ENCODE measurements at regions of chr2 and their contacts with region 1.

Region 1: DNA sequence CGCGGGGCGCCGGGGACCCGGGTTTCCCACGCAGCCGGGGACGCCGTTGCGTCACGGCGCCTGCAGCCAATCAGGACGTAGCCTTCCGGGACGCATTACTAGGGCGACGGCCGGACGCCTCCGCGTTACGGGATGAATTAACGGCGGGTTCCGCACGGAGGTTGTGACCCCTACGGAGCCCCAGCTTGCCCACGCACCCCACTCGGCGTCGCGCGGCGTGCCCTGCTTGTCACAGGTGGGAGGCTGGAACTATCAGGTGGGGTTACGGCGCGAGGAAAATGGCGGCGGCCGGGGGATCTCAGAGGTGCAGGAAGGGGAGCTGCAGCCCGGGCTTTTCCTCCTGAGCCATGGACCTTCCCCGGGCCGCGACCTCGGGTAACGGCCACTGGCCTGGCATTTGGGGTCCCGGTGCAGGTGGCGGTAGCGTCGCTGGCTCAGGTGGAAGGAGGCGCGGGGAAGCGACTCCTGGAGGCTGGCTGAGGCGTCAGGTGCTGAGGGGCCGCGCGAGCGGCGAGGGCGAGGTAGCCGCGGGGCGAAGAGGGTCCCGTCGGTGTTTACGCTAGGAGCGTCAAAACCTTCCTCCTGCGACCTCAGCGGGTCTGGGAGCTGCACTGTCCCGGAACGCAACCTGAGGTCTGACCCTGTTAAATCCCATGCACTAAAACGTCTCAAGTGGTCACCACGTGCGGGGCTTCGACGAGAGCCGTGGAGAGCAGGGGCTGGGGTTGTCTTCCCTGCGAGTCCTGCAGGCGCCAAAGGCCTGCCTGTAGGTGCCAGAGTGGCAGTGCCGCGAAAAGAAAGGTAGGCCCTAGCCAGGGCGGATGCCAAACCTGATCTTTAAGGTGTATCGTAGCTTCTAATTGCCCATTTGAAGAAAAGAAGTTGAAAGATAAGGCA is at the start of gene LCLAT1:
- DNase-seq: peak; percentile 92
- ATAC-seq: peak; percentile 93
- H3K4me3 ChIP-seq: peak within 1 kb of the TSS; percentile 88 to 98 (median 97)
- H3K4me3 Mint-ChIP-seq: peak within 1 kb of the TSS; percentile 97
- H3K27ac ChIP-seq: peak within 1 kb of the TSS; percentile 82 to 84
- H3K27ac Mint-ChIP-seq: peak within 1 kb of the TSS; percentile 95
- H3K4me1 ChIP-seq: peaks cover 16 to 17% of the 10 kb centered on the region in 2 donors
- H3K4me1 Mint-ChIP-seq: peaks cover 25% of the 10 kb centered on the region
- H3K27me3 ChIP-seq: no peaks in the 10 kb centered on the region
- H3K27me3 Mint-ChIP-seq: no peaks in the 10 kb centered on the region
- CTCF ChIP-seq: peak; percentile 20
- total RNA-seq, gene LCLAT1: 21.7 and 21.9 TPM in 2 replicates

Region 2: DNA sequence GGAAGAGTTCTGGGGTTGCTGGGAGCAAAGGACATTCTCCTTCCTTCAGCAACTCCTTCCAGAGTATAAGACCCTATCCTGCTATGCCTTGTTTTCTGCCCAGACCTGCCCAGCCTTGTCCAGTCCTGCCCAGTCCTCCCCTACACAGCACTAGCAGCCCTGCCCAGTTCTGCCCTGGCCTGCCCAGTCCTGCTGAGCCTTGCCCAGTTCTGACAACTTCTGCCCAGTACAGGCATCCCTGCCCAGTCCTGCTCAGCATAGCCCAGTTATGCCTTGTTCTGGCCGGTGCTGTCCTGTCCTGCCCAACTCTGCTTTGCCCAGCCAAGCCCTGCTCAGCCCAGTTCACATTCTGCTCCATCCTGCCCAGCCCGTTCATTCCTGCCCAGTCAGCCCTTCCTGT is 481.1 kb before region 1 on chr2:
- CTCF ChIA-PET with region 1: no interaction called
- POLR2A ChIA-PET with region 1: no interaction called
- intact Hi-C with region 1: no loop called
- DNase-seq: no peak
- ATAC-seq: no peak
- H3K4me3 ChIP-seq: no peak overlapping the region
- H3K4me3 Mint-ChIP-seq: no peak overlapping the region
- H3K27ac ChIP-seq: no peak overlapping the region
- H3K27ac Mint-ChIP-seq: no peak overlapping the region
- H3K4me1 ChIP-seq: no peaks in the 10 kb centered on the region
- H3K4me1 Mint-ChIP-seq: no peaks in the 10 kb centered on the region
- H3K27me3 ChIP-seq: peaks cover 0 to 11% (median 2%) of the 10 kb centered on the region in 4 experiments
- H3K27me3 Mint-ChIP-seq: peaks cover 18% of the 10 kb centered on the region
- CTCF ChIP-seq: no peak

Region 3: DNA sequence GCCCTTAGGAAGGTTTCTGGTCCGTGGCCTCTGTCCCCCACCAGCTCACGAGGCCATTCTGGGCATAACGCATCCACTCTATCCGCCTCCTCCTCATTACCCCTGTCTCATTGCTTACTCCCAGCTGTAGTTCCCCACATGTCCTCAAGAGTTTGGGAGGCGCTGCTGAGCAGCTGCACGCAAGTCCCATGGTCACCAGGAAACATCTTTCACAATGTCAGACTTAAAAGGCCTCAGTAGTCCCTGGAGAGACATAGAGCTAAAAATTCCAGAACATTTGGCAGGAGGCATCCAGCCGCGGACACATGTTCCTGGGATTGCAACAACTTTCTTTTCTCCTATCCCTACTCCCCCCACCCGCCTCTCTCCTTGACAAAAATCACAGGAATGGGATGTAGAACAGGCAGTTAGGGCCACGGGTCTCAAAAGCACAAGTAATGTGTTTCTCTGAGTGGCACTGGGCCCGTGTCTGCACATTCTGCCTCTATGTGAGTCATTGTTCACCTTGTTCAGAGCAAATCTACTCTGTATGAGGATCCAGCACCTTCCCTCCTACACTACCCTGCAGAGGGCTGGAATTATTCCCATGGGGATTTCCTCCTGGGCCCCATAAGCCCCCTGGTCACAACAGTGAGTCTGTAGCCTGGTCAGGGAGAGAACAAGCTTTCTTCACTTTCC is 207.9 kb before region 1 on chr2:
- CTCF ChIA-PET with region 1: interaction called, 23 read pairs
- POLR2A ChIA-PET with region 1: interaction called, 5 read pairs
- intact Hi-C with region 1: no loop called
- DNase-seq: peak; percentile 79
- ATAC-seq: peak; percentile 71
- H3K4me3 ChIP-seq: no peak overlapping the region
- H3K4me3 Mint-ChIP-seq: peak overlapping the region; percentile 35
- H3K27ac ChIP-seq: peak overlapping the region in 1 of 2 donors; percentile 94
- H3K27ac Mint-ChIP-seq: peak overlapping the region; percentile 62
- H3K4me1 ChIP-seq: peaks cover 73 to 79% of the 10 kb centered on the region in 2 donors
- H3K4me1 Mint-ChIP-seq: peaks cover 87% of the 10 kb centered on the region
- H3K27me3 ChIP-seq: no peaks in the 10 kb centered on the region
- H3K27me3 Mint-ChIP-seq: no peaks in the 10 kb centered on the region
- CTCF ChIP-seq: peak; percentile 88

Region 4: DNA sequence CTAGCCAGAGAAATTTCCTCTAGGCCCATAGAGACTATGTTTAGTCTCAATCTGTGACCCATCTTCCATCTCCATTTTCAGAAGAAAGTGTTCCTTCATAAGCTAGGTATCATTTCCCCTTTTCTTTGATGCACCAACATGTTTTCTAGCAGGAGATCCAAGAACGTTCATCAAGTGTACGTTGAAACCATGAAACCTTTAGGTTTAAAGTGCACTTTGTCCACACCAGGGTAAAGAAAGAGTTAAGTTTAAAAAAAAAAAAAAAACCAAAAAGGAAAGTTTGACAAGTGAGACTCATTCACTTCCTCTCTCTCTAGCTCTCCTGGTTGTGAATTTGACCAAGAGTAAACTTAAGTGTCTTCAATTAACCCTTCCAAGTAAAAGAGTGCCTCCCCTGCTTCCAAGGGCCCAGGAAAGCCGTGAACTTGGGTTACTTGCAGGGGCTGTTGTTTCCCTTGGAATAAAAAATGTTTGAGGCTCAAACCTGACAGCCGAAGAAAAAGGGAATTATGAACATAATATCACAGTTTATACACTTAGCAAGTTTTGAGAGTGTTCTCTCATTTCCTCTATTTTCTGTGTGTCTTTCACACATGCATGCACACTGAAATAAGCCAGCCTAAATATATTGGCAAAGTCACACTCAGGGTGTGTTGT is 159.4 kb before region 1 on chr2:
- CTCF ChIA-PET with region 1: interaction called, 3 read pairs
- POLR2A ChIA-PET with region 1: no interaction called
- intact Hi-C with region 1: loop called (anchors 5 kb)
- DNase-seq: peak; percentile 77
- ATAC-seq: peak; percentile 85
- H3K4me3 ChIP-seq: peak overlapping the region; percentile 19 to 69 (median 34)
- H3K4me3 Mint-ChIP-seq: peak overlapping the region; percentile 58
- H3K27ac ChIP-seq: peak overlapping the region; percentile 81 to 86
- H3K27ac Mint-ChIP-seq: peak overlapping the region; percentile 84
- H3K4me1 ChIP-seq: peaks cover 83 to 91% of the 10 kb centered on the region in 2 donors
- H3K4me1 Mint-ChIP-seq: peaks cover 82% of the 10 kb centered on the region
- H3K27me3 ChIP-seq: no peaks in the 10 kb centered on the region
- H3K27me3 Mint-ChIP-seq: no peaks in the 10 kb centered on the region
- CTCF ChIP-seq: no peak

Region 5: GRCh38 chr2:30421604-30422443 is 25.6 kb before region 1 on chr2:
- CTCF ChIA-PET with region 1: interaction called, 4 read pairs
- POLR2A ChIA-PET with region 1: interaction called, 4 read pairs
- intact Hi-C with region 1: loop called (anchors 2 kb)
- DNase-seq: peak; percentile 19
- ATAC-seq: peak; percentile 59
- H3K4me3 ChIP-seq: peak overlapping the region in 1 of 5 experiments; percentile 41
- H3K4me3 Mint-ChIP-seq: peak overlapping the region; percentile 64
- H3K27ac ChIP-seq: peak overlapping the region; percentile 64 to 81
- H3K27ac Mint-ChIP-seq: peak overlapping the region; percentile 82
- H3K4me1 ChIP-seq: peaks cover 28 to 32% of the 10 kb centered on the region in 2 donors
- H3K4me1 Mint-ChIP-seq: peaks cover 31% of the 10 kb centered on the region
- H3K27me3 ChIP-seq: no peaks in the 10 kb centered on the region
- H3K27me3 Mint-ChIP-seq: no peaks in the 10 kb centered on the region
- CTCF ChIP-seq: no peak

Region 6: DNA sequence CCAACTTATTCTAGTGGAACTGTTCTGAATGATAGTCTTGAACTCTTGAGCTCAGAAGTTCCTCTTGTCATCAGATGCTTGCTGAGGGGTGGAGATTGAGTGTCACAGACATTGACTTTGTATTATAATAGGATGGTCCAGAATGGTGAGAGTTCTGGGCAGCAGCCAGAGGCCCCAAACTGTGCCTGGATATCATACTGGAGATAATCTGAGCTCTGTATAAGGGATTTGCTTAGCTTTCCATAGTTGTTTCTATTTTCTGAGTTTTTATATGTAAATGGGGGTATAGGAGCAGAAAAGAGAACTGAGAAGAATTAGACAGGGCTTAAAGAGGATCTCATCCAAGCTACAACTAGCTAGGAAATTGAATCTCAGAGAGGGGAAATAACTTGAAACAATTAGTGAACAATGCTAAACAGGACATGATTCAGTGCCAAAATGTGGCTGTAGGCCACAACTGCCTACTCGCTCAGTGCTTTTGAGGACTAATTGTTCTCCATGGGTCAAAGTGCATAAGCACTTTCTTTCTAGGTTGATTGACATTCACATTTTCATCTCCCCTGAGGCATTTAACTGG is 10.4 kb before region 1 on chr2:
- CTCF ChIA-PET with region 1: interaction called, 21 read pairs
- POLR2A ChIA-PET with region 1: interaction called, 3 read pairs
- intact Hi-C with region 1: loop called (anchors 1 kb)
- DNase-seq: peak; percentile 68
- ATAC-seq: peak; percentile 83
- H3K4me3 ChIP-seq: no peak overlapping the region
- H3K4me3 Mint-ChIP-seq: peak overlapping the region; percentile 66
- H3K27ac ChIP-seq: peak overlapping the region; percentile 70 to 78
- H3K27ac Mint-ChIP-seq: peak overlapping the region; percentile 90
- H3K4me1 ChIP-seq: peaks cover 28 to 39% of the 10 kb centered on the region in 2 donors
- H3K4me1 Mint-ChIP-seq: peaks cover 32% of the 10 kb centered on the region
- H3K27me3 ChIP-seq: no peaks in the 10 kb centered on the region
- H3K27me3 Mint-ChIP-seq: no peaks in the 10 kb centered on the region
- CTCF ChIP-seq: no peak

Region 7: DNA sequence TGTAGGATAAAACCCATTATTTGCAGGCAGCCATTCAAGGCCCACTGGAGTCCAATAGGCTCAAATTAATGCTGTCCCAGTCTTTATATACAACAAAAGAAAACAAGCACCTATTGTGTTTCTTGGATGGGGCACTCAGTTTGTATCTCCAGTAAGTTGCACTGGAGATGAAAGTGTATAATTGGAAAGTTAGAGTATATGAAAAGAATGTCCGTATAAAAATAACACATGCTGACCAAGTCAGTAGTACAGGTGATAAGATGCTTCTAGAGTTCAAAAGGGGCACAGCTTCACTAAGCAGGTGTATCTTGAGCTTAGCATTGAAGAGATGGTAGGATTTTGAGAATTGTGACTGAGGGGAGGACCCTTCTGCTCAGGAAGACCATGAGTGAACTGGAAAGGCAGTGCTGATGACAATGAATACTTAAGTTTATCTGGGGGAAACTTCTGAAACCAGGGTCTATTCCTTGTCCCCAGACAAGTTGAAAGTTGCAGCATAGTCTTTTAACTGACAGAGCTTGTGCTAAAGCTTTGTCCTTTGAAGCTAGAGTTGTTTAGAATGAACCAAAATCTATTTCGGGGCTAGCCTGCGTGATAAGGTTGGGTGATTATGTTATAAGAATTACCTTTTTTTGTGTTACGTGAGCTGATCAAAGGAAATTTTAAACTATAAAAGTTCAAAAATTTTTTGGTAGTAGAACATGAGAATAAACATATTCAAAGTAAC is 14.9 kb after region 1 on chr2:
- CTCF ChIA-PET with region 1: no interaction called
- POLR2A ChIA-PET with region 1: no interaction called
- intact Hi-C with region 1: loop called (anchors 2 kb)
- DNase-seq: no peak
- ATAC-seq: no peak
- H3K4me3 ChIP-seq: no peak overlapping the region
- H3K4me3 Mint-ChIP-seq: peak overlapping the region; percentile 54
- H3K27ac ChIP-seq: peak overlapping the region in 1 of 2 donors; percentile 69
- H3K27ac Mint-ChIP-seq: peak overlapping the region; percentile 66
- H3K4me1 ChIP-seq: peaks cover 31 to 36% of the 10 kb centered on the region in 2 donors
- H3K4me1 Mint-ChIP-seq: peaks cover 56% of the 10 kb centered on the region
- H3K27me3 ChIP-seq: no peaks in the 10 kb centered on the region
- H3K27me3 Mint-ChIP-seq: no peaks in the 10 kb centered on the region
- CTCF ChIP-seq: no peak

Region 8: DNA sequence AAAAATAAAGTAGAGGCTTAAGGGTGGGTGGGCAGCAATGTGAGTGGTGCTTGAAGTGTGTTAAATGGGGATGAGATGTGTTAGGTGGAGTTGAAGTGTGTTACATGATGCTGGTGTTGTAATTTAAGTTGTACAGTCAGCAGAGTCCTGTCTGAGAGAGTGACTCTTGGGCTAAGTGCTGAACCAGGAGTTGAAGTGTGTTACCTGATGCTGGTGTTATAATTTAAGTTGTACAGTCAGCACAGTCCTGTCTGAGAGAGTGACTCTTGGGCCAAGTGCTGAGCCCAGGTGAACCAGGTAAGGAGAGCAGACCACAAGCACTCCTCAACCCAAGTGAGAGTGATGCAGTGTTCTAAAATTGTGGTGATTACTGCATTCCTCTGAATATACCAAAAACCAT is 40.2 kb after region 1 on chr2:
- CTCF ChIA-PET with region 1: no interaction called
- POLR2A ChIA-PET with region 1: no interaction called
- intact Hi-C with region 1: loop called (anchors 5 kb)
- DNase-seq: no peak
- ATAC-seq: no peak
- H3K4me3 ChIP-seq: no peak overlapping the region
- H3K4me3 Mint-ChIP-seq: no peak overlapping the region
- H3K27ac ChIP-seq: no peak overlapping the region
- H3K27ac Mint-ChIP-seq: no peak overlapping the region
- H3K4me1 ChIP-seq: peaks cover 5 to 28% of the 10 kb centered on the region in 2 donors
- H3K4me1 Mint-ChIP-seq: peaks cover 49% of the 10 kb centered on the region
- H3K27me3 ChIP-seq: no peaks in the 10 kb centered on the region
- H3K27me3 Mint-ChIP-seq: no peaks in the 10 kb centered on the region
- CTCF ChIP-seq: no peak

Measured in B cell (primary cell).